Right ventricle myocardium inferior (tissue), 1 donor: ENCODE measurements at regions of chr13 and their contacts with region 1.

Region 1: GRCh38 chr13:102596147-102597028 is at the start of gene TPP2:
- DNase-seq: peak; percentile 99
- ATAC-seq: peak; percentile 99
- total RNA-seq, gene TPP2: 29.9 TPM

Region 2: DNA sequence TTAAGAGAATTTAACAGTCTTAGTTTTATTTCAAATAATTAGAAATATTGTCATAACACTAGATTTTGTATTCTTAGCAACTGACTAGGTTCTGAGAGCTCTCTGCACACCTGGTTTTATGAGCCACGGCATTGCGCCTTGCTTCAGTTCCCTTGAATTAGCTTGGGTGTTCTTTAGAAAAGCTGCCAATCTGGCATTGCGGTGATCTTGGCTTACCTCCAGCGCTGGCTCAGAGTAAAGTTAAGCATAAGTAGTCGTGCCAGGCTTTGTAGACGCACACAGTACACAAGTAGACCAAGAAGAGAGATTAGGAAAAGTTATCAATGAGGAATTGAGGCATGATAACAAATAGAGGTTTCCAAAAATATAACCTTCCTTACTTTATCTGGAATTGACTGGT is 46.1 kb after region 1 on chr13:
- intact Hi-C with region 1: loop called (anchors 5 kb)
- DNase-seq: no peak
- ATAC-seq: peak; percentile 73

Region 3: GRCh38 chr13:102773441-102774215 is 177.2 kb after region 1 on chr13 and contains the start of gene TEX30:
- intact Hi-C with region 1: loop called (anchors 2 kb)
- DNase-seq: peak; percentile 92
- ATAC-seq: peak; percentile 100
- total RNA-seq, gene TEX30: 9.5 TPM

Region 4: DNA sequence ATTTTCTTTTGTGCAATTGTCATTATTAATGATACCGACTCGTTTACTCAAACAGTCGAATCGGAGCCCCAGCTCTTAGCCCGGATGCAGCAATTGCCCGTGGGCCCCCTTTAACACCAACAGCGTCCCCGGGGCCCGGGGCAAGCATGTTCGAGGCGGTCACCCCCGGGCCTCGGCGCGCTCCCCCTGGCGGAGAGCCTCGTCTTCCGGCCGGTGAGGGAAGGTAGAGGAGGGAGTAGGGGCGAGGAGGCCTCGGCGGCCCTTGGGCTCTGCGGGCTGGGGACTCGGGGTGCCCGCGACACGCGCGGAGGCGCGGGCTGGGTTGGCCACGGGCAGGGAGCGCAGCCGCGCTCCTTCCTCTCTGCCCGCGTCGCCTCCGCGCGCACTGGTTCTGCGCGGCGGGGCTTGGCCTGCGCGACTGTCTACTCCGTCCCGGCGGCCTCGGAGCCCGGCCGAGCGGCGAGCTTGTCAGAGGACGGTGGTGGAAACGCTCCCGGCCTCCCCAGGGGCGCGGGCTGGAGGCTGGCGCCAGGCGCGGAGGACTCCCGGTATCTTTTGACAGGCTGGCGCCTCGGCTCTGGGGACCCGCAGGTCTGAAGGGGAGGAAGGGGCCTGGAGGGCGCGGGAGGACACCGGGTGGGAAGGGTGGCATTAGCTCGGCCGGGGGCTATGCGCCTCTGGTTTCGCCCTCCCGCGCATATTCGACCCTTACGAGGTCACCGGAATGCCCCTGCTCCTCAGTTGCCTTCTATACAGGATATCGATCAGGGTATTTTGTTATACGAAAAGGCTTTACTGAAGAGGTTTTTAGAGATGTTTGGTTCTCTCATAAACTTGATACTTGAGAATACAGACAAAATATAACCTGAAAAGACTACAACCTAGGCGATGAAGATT is 204.0 kb after region 1 on chr13:
- intact Hi-C with region 1: loop called (anchors 5 kb)
- DNase-seq: peak; percentile 89
- ATAC-seq: peak; percentile 91

Region 5: GRCh38 chr13:102845630-102846260 is 249.4 kb after region 1 on chr13 and contains the start of gene ERCC5:
- intact Hi-C with region 1: loop called (anchors 1 kb)
- DNase-seq: peak; percentile 96
- ATAC-seq: peak; percentile 94
- total RNA-seq, gene ERCC5: 27.3 TPM